ENCODE measurements at regions of chr22 and their contacts with region 1.

Region 1: DNA sequence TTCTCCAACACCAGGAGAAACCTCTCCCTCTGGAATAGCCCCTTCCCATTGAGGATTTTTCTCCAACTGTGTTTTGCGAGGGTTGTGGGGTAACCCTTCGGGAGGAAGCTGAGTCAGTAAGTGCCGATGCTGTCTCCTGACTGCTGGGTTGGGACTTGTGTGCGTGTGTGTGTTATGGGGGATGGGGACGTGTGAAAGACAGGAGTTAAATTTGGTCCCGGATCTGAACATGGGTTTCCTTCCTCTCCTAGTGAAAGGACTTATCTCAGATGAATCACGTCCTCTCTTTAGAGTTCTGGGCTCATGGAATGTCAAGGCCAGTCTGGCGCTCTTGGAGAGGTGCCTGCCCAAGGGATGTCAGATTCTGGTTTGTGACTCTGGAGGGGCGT is 33.3 kb downstream of the KIAA1671 start:
- DNase-seq: peak; percentile 99
- H3K4me3 ChIP-seq: no peak overlapping the region
- H3K27ac ChIP-seq: peak overlapping the region; percentile 88
- H3K4me1 ChIP-seq: peaks cover 66% of the 10 kb centered on the region
- H3K27me3 ChIP-seq: no peaks in the 10 kb centered on the region
- CTCF ChIP-seq: no peak
- POLR2A ChIP-seq: peak; percentile 89

Region 2: GRCh38 chr22:24758164-24758799 is 227.5 kb before region 1 on chr22:
- CTCF ChIA-PET with region 1: no interaction called
- POLR2A ChIA-PET with region 1: no interaction called
- dilution Hi-C with region 1: no loop called
- intact Hi-C with region 1: no loop called
- DNase-seq: peak; percentile 70
- H3K4me3 ChIP-seq: no peak overlapping the region
- H3K27ac ChIP-seq: no peak overlapping the region
- H3K4me1 ChIP-seq: peaks cover 25% of the 10 kb centered on the region
- H3K27me3 ChIP-seq: peaks cover 2 to 7% of the 10 kb centered on the region in 2 experiments
- CTCF ChIP-seq: peak; percentile 60 to 70
- POLR2A ChIP-seq: no peak

Region 3: DNA sequence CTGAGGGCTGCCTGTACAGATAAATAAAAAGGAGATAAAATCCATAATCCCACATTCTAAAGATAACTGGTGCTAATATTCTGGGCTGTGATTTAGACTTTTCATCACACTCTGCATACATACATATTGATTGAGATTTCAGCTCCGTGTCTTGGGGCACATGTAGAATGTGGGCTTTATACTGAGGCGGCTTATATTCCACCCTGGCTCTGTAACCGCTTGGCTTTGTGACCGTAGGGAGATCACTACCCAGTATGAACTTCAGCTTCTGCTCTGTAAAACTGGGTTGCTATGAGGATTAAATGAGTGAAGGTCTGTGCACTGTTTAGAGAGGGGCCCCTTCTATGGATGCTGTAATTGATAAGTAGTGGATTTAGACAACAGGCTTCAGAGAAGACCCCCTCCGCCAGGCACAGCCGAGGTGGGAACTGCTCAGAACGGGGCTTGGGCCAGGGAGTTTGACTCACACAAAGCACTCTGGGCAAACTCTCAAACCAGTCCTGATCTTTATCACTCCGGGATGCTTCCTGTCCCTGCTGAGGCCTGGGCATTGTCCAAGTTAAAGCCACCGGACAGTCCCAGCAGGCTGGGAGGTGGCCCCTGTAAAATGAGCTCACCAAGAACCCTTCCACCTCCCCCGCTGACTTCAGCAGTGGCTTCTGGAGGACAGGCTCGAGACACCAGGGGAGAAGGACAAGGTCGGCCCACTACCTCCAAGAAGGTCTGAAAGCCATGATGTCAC is 16.1 kb before region 1 on chr22:
- CTCF ChIA-PET with region 1: interaction called, 7 read pairs
- POLR2A ChIA-PET with region 1: interaction called, 5 read pairs
- dilution Hi-C with region 1: no loop called
- intact Hi-C with region 1: loop called (anchors 1 kb)
- DNase-seq: peak; percentile 86
- H3K4me3 ChIP-seq: no peak overlapping the region
- H3K27ac ChIP-seq: peak overlapping the region; percentile 82
- H3K4me1 ChIP-seq: peaks cover 34% of the 10 kb centered on the region
- H3K27me3 ChIP-seq: no peaks in the 10 kb centered on the region
- CTCF ChIP-seq: no peak
- POLR2A ChIP-seq: no peak

Region 4: GRCh38 chr22:24996420-24996952 is 10.7 kb after region 1 on chr22:
- CTCF ChIA-PET with region 1: interaction called, 5 read pairs
- POLR2A ChIA-PET with region 1: no interaction called
- dilution Hi-C with region 1: no loop called
- intact Hi-C with region 1: loop called (anchors 2 kb)
- DNase-seq: peak; percentile 48
- H3K4me3 ChIP-seq: no peak overlapping the region
- H3K27ac ChIP-seq: peak overlapping the region; percentile 49
- H3K4me1 ChIP-seq: peaks cover 30% of the 10 kb centered on the region
- H3K27me3 ChIP-seq: no peaks in the 10 kb centered on the region
- CTCF ChIP-seq: no peak
- POLR2A ChIP-seq: no peak

Region 5: DNA sequence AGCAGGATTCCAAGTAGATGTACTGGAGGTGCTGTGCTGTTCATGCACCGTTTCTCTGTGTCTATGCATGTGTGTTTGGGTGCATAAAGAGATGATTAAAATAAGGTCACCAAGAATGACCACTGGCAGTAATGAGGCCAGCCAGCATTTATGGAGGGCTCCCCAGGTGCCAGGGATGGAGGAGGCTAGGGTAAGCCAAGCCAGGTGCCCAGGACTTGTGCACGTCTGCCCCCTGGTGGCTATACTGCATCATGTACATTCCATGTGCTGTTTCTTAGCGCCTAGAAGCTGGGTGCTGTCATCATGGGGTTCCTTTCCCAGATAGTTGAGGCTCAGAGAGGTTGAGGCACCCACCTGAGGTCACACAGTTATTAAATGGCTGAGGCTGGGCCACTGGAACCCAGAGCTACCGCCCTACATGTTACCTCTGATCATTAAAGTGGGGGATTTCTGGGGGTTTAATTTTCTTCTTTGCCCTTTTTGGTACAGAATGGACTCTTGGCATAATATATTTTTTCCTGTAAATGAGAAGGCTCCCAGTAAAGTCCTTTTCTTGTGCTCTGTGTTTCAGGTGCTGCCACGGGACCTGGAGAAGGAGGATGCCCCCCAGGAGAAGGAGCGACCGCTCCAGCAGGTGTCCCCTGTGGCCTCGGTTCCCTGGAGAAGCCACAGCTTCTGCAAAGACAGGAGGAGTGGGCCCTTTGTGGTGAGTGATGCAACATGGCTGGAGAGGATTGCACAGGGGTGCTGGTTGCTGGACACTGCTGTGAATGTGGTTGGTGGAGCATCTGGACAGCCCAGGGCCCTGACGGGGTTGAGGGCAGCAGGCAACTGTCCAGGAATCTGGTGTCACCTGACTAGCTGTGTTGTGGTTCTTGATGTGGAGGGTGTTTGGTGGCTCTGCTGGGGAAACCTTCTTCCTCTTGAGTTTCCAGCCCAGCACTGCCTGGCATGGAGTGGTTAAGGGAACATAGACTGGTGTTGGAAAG is 63.1 kb after region 1 on chr22:
- CTCF ChIA-PET with region 1: interaction called, 11 read pairs
- POLR2A ChIA-PET with region 1: no interaction called
- dilution Hi-C with region 1: no loop called
- intact Hi-C with region 1: loop called (anchors 1 kb)
- DNase-seq: peak; percentile 63
- H3K4me3 ChIP-seq: no peak overlapping the region
- H3K27ac ChIP-seq: no peak overlapping the region
- H3K4me1 ChIP-seq: peaks cover 4% of the 10 kb centered on the region
- H3K27me3 ChIP-seq: no peaks in the 10 kb centered on the region
- CTCF ChIP-seq: peak; percentile 82 to 88
- POLR2A ChIP-seq: no peak

Measured in endothelial cell of umbilical vein (primary cell).